B cell (primary cell): ENCODE measurements at regions of chr12 and their contacts with region 1.

Region 1: GRCh38 chr12:94101738-94102660 is 46.4 kb upstream of the PLXNC1 start:
- DNase-seq: peak; percentile 90
- ATAC-seq: peak; percentile 84
- H3K4me3 ChIP-seq: peak overlapping the region; percentile 51 to 94 (median 65)
- H3K4me3 Mint-ChIP-seq: peak overlapping the region; percentile 91
- H3K27ac ChIP-seq: no peak overlapping the region
- H3K27ac Mint-ChIP-seq: peak overlapping the region; percentile 50
- H3K4me1 ChIP-seq: peaks cover 4 to 14% of the 10 kb centered on the region in 2 donors
- H3K4me1 Mint-ChIP-seq: peaks cover 10% of the 10 kb centered on the region
- H3K27me3 ChIP-seq: peaks cover 0 to 31% (median 11%) of the 10 kb centered on the region in 4 experiments
- H3K27me3 Mint-ChIP-seq: peaks cover 52% of the 10 kb centered on the region
- CTCF ChIP-seq: peak; percentile 78

Region 2: GRCh38 chr12:92784795-92785562 is 1317.0 kb before region 1 on chr12:
- CTCF ChIA-PET with region 1: interaction called, 42 read pairs
- POLR2A ChIA-PET with region 1: no interaction called
- intact Hi-C with region 1: loop called (anchors 1 kb)
- DNase-seq: peak; percentile 75
- ATAC-seq: peak; percentile 98
- H3K4me3 ChIP-seq: no peak overlapping the region
- H3K4me3 Mint-ChIP-seq: no peak overlapping the region
- H3K27ac ChIP-seq: no peak overlapping the region
- H3K27ac Mint-ChIP-seq: no peak overlapping the region
- H3K4me1 ChIP-seq: no peaks in the 10 kb centered on the region
- H3K4me1 Mint-ChIP-seq: no peaks in the 10 kb centered on the region
- H3K27me3 ChIP-seq: no peaks in the 10 kb centered on the region
- H3K27me3 Mint-ChIP-seq: no peaks in the 10 kb centered on the region
- CTCF ChIP-seq: peak; percentile 81

Region 3: DNA sequence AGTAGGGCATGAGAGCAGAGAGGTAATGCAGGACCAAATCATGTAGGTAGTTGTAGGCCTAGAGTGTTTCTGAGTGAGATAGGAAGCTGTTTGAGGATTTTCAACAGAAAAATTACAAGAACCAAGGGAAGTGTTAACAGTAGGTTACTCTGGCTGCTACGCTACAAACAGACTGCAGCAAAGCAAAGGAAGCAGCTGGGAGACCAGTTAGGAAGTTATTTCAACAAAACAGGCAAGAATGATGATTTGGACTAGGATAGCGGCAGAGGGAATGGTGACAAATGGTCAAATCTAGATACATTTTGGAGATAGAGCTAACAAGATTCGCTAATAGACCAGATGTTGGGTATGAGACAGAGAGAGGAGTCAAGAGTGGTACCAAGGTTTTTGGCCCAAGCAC is 607.9 kb before region 1 on chr12:
- CTCF ChIA-PET with region 1: interaction called, 17 read pairs
- POLR2A ChIA-PET with region 1: no interaction called
- intact Hi-C with region 1: no loop called
- DNase-seq: no peak
- ATAC-seq: no peak
- H3K4me3 ChIP-seq: no peak overlapping the region
- H3K4me3 Mint-ChIP-seq: no peak overlapping the region
- H3K27ac ChIP-seq: no peak overlapping the region
- H3K27ac Mint-ChIP-seq: no peak overlapping the region
- H3K4me1 ChIP-seq: no peaks in the 10 kb centered on the region
- H3K4me1 Mint-ChIP-seq: no peaks in the 10 kb centered on the region
- H3K27me3 ChIP-seq: no peaks in the 10 kb centered on the region
- H3K27me3 Mint-ChIP-seq: no peaks in the 10 kb centered on the region
- CTCF ChIP-seq: no peak

Region 4: GRCh38 chr12:93536766-93537488 is 565.1 kb before region 1 on chr12:
- CTCF ChIA-PET with region 1: interaction called, 10 read pairs
- POLR2A ChIA-PET with region 1: no interaction called
- intact Hi-C with region 1: no loop called
- DNase-seq: peak; percentile 25
- ATAC-seq: peak; percentile 58
- H3K4me3 ChIP-seq: peak overlapping the region in 1 of 5 experiments; percentile 13
- H3K4me3 Mint-ChIP-seq: peak overlapping the region; percentile 59
- H3K27ac ChIP-seq: peak overlapping the region in 1 of 2 donors; percentile 27
- H3K27ac Mint-ChIP-seq: peak overlapping the region; percentile 7
- H3K4me1 ChIP-seq: peaks cover 20 to 23% of the 10 kb centered on the region in 2 donors
- H3K4me1 Mint-ChIP-seq: peaks cover 24% of the 10 kb centered on the region
- H3K27me3 ChIP-seq: no peaks in the 10 kb centered on the region
- H3K27me3 Mint-ChIP-seq: no peaks in the 10 kb centered on the region
- CTCF ChIP-seq: no peak

Region 5: GRCh38 chr12:93766796-93767523 is 335.0 kb before region 1 on chr12:
- CTCF ChIA-PET with region 1: interaction called, 41 read pairs
- POLR2A ChIA-PET with region 1: no interaction called
- intact Hi-C with region 1: no loop called
- DNase-seq: no peak
- ATAC-seq: no peak
- H3K4me3 ChIP-seq: no peak overlapping the region
- H3K4me3 Mint-ChIP-seq: no peak overlapping the region
- H3K27ac ChIP-seq: no peak overlapping the region
- H3K27ac Mint-ChIP-seq: no peak overlapping the region
- H3K4me1 ChIP-seq: no peaks in the 10 kb centered on the region
- H3K4me1 Mint-ChIP-seq: peaks cover 27% of the 10 kb centered on the region
- H3K27me3 ChIP-seq: no peaks in the 10 kb centered on the region
- H3K27me3 Mint-ChIP-seq: no peaks in the 10 kb centered on the region
- CTCF ChIP-seq: no peak

Region 6: DNA sequence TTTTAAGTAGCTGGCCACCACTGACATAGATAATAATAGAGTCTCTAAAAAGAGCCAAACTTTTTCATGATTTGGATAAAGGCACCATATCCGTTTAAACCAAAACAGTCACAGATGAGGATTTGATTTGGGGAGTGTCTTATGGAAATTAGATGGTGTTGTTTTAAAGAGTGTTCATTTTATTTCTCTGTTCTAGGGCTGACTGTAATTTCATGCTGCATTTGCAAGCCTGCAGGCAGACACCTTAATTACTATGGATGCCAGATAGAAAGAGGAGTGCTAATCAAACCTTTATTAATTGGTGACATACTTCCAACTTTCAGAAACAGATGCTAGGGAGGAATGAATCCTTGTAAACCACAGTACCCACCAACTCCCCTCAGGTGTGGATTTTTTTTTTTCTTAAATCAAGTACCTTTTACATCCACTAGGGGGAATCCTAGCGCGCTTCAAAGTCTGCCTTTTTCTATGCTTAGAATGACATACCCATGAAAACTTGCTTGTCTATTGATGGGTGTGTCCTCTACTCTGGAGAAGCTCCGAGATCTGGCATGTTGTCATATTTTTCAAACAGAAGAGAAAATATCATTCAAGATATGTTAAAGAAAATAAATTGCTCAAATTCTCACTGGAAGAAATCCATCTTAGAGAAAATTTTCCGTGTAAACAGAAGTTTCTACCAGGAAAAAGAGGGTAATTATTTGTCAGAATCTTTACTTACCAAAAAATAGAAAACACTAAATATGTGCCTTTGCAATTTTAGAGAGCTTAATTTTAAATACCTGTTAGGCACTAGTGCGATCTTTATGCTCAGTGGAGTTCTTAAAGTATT is 32.2 kb after region 1 on chr12:
- CTCF ChIA-PET with region 1: interaction called, 13 read pairs
- POLR2A ChIA-PET with region 1: no interaction called
- intact Hi-C with region 1: no loop called
- DNase-seq: peak; percentile 74
- ATAC-seq: peak; percentile 91
- H3K4me3 ChIP-seq: no peak overlapping the region
- H3K4me3 Mint-ChIP-seq: no peak overlapping the region
- H3K27ac ChIP-seq: no peak overlapping the region
- H3K27ac Mint-ChIP-seq: no peak overlapping the region
- H3K4me1 ChIP-seq: peaks cover 3 to 10% of the 10 kb centered on the region in 2 donors
- H3K4me1 Mint-ChIP-seq: peaks cover 10% of the 10 kb centered on the region
- H3K27me3 ChIP-seq: no peaks in the 10 kb centered on the region
- H3K27me3 Mint-ChIP-seq: peaks cover 3% of the 10 kb centered on the region
- CTCF ChIP-seq: peak; percentile 89